Activated CD4-positive, alpha-beta memory T cell treated with anti-CD3 and anti-CD28 coated beads for 36 hours (primary cell): ENCODE measurements at regions of chr7 and their contacts with region 1.

Region 1: GRCh38 chr7:55641273-55641691 is 69.0 kb upstream of the VOPP1 start:
- DNase-seq: peak; percentile 32
- H3K4me3 Mint-ChIP-seq: no peak overlapping the region
- H3K27ac Mint-ChIP-seq: peak overlapping the region; percentile 9
- H3K4me1 Mint-ChIP-seq: peaks cover 9% of the 10 kb centered on the region
- H3K27me3 Mint-ChIP-seq: peaks cover 1% of the 10 kb centered on the region

Region 2: GRCh38 chr7:55593515-55594318 is 47.6 kb before region 1 on chr7:
- CTCF ChIA-PET with region 1: no interaction called
- POLR2A ChIA-PET with region 1: no interaction called
- intact Hi-C with region 1: no loop called
- DNase-seq: peak; percentile 84
- H3K4me3 Mint-ChIP-seq: no peak overlapping the region
- H3K27ac Mint-ChIP-seq: no peak overlapping the region
- H3K4me1 Mint-ChIP-seq: peaks cover 11% of the 10 kb centered on the region
- H3K27me3 Mint-ChIP-seq: peaks cover 2% of the 10 kb centered on the region

Region 3: GRCh38 chr7:55723621-55723941 is 82.3 kb after region 1 on chr7:
- CTCF ChIA-PET with region 1: no interaction called
- POLR2A ChIA-PET with region 1: no interaction called
- intact Hi-C with region 1: loop called (anchors 5 kb)
- DNase-seq: no peak
- H3K4me3 Mint-ChIP-seq: no peak overlapping the region
- H3K27ac Mint-ChIP-seq: no peak overlapping the region
- H3K4me1 Mint-ChIP-seq: no peaks in the 10 kb centered on the region
- H3K27me3 Mint-ChIP-seq: no peaks in the 10 kb centered on the region

Region 4: GRCh38 chr7:55964261-55965099 is 323.2 kb after region 1 on chr7 and contains the start of gene NIPSNAP2:
- CTCF ChIA-PET with region 1: interaction called, 29 read pairs
- POLR2A ChIA-PET with region 1: no interaction called
- intact Hi-C with region 1: loop called (anchors 1 kb)
- DNase-seq: peak; percentile 67
- H3K4me3 Mint-ChIP-seq: peak within 1 kb of the TSS; percentile 84
- H3K27ac Mint-ChIP-seq: peak within 1 kb of the TSS; percentile 85
- H3K4me1 Mint-ChIP-seq: peaks cover 32% of the 10 kb centered on the region
- H3K27me3 Mint-ChIP-seq: no peaks in the 10 kb centered on the region
- total RNA-seq, gene NIPSNAP2: 55.7 to 57.4 TPM